ENCODE measurements at regions of chr16 and their contacts with region 1.

Region 1: GRCh38 chr16:57045694-57046381 is 46.5 kb upstream of the CPNE2 start:
- DNase-seq: peak; percentile 55
- ATAC-seq: peak; percentile 43
- H3K4me3 ChIP-seq: no peak overlapping the region
- H3K27ac ChIP-seq: peak overlapping the region; percentile 76
- H3K4me1 ChIP-seq: peaks cover 90% of the 10 kb centered on the region
- H3K27me3 ChIP-seq: no peaks in the 10 kb centered on the region
- CTCF ChIP-seq: peak; percentile 83 to 89 (median 83)
- EP300 ChIP-seq: peak; percentile 42 to 50; a peak in 1 of 4 replicates
- POLR2A ChIP-seq: peak; percentile 41; the same call in 1 of the 2 replicates
- RAD21 ChIP-seq: peak; percentile 88

Region 2: DNA sequence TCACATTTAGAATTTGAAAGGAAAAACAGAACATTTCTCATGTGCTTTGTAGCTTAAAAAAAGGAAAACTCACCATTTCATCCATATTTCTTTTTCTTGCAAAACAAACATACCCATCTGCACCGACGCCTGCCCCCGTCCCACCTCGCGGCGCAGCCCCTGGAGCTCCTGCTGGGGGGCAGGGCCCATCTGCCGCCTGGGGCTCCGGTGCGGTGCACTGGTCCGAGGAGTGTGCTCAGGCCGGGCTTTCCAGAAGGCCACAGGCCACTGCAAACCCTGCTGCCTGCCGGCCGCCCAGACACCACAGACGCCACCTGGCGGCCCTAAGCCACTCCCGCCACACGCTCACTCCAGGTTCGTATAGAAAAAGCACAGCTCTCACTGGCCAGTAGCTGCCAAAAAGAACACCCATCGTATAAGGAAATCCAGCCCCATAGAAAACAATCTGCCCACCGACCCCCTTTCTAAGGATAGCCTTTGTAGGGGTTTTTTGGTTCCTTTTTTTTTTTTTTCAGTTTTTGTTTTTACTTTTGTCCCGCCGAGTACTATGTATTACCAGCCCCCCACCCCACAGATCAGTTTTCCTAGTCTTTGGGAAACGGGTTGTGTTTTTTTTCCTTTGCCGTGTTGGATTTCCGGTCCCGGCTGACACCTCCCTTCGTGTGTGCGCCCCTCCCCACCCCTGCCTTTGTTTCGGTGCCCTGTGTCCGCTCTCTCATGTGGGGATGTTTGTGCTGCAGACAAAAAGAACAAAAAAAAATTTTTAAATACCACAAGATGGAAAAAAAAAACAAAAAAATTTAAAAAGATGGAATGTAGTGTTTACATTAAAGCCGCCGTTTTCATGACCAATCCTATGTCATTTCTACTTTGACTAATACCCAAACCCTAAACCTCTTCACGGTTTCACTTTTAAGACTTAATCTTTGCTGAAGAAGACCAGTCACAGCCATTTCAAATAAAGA is 689.3 kb before region 1 on chr16:
- CTCF ChIA-PET with region 1: no interaction called
- POLR2A ChIA-PET with region 1: no interaction called
- RAD21 ChIA-PET with region 1: no interaction called
- SMC1A ChIA-PET with region 1: no interaction called
- in situ Hi-C with region 1: no loop called
- intact Hi-C with region 1: no loop called
- DNase-seq: peak; percentile 46
- ATAC-seq: peak; percentile 98
- H3K4me3 ChIP-seq: peak overlapping the region; percentile 61
- H3K27ac ChIP-seq: peak overlapping the region; percentile 35
- H3K4me1 ChIP-seq: peaks cover 12% of the 10 kb centered on the region
- H3K27me3 ChIP-seq: no peaks in the 10 kb centered on the region
- CTCF ChIP-seq: peak; percentile 81 to 96 (median 87)
- EP300 ChIP-seq: 0 out of 4 replicates have a peak, but pooled peaks of 1 of the 2 experiments have one; percentile 1
- POLR2A ChIP-seq: no peak
- RAD21 ChIP-seq: peak; percentile 52

Region 3: DNA sequence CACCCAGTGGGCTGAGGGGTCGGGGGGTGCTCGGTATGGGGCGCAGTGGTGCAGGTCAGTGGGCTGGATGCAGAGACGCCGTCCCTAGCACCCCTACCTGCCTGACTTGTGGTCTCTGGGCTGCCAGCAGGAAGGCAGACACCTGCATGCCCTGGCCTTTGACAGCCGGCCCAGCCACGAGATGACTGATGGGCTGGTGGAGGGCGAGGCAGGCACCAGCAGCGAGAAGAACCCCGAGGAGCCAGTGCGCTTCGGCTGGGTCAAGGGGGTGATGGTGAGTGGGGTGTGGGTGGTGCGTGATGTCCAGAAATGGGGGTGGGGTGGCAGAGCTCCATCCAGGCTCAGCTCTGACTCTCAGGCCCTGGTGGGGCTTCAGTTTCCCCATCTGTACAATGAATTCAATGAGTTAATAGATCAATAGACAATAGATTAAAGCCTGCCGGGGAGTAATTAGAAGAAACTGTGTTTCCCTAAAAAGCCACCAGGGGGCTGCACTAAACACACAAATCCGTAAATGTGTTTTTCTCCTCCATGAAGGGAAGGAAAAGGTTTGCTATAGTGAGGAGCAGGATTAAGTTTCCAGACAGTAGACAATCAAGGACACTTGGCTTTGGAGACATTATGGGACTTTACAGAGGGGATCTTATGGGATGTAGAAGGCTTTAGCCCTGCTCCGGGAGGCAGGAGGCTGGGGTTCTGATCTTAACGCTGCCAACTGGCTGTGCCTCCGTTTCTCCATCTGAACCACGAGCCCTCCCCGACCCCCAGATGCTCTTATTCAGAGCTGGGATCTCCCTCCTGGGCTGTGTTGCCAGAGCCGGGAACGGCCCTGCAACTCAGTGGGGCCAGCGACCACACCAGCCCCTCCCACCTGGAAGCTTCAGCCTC is 178.7 kb before region 1 on chr16:
- CTCF ChIA-PET with region 1: interaction called, 8 read pairs
- POLR2A ChIA-PET with region 1: no interaction called
- RAD21 ChIA-PET with region 1: interaction called, 5 read pairs
- SMC1A ChIA-PET with region 1: interaction called, 3 read pairs
- in situ Hi-C with region 1: loop called (anchors 5 kb)
- intact Hi-C with region 1: loop called (anchors 5 kb)
- DNase-seq: no peak
- ATAC-seq: peak; percentile 27
- H3K4me3 ChIP-seq: no peak overlapping the region
- H3K27ac ChIP-seq: no peak overlapping the region
- H3K4me1 ChIP-seq: peaks cover 35% of the 10 kb centered on the region
- H3K27me3 ChIP-seq: no peaks in the 10 kb centered on the region
- CTCF ChIP-seq: peak; percentile 65 to 75 (median 65)
- EP300 ChIP-seq: no peak
- POLR2A ChIP-seq: no peak
- RAD21 ChIP-seq: peak; percentile 88

Region 4: DNA sequence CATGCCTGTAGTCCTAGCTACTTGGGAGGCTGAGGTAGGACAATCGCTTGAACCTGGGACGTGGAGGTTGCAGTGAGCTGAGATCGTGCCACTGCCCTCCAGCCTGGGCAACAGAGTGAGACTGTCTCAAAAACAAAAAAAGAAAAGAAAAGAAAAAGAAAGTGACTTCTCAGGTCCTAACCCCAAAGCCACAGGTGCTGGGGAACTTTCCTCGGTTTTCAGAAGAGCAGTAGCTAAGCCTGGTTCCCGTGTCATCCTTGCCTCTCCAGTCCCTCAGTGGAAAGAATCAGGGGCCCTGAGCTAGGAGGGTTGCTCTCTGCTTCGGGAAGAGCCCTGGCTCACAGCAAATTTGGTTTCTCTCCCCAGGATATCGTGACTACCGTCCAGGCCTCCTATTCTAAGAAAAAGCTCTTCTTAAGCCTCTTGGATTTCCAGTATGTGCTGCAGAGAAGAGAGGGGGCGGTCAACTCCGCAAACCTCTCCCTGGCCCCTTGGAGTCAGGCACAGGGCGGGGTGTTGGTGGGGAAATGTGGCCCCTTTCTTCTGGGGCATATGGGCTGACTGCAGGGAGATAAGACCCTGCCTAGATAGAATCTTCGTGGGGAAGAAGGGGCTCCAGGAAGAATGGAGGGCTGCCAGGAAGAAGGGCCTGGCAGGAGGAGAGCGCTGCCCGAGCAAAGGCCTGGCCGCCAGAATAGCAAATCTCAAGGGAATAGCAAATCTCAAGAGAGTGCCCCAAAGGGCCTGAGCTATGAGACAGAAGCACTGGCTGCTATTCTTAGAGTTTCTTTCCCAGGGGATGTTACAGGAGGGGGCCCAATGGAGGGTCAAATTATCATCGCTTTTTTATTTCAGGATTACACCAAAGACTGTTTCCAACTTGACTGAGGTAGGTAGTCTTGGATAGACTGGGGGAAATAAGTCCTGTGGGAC is 64.8 kb before region 1 on chr16:
- CTCF ChIA-PET with region 1: interaction called, 32 read pairs
- POLR2A ChIA-PET with region 1: interaction called, 104 read pairs
- RAD21 ChIA-PET with region 1: interaction called, 108 read pairs
- SMC1A ChIA-PET with region 1: interaction called, 111 read pairs
- in situ Hi-C with region 1: no loop called
- intact Hi-C with region 1: no loop called
- DNase-seq: no peak
- ATAC-seq: peak; percentile 67
- H3K4me3 ChIP-seq: no peak overlapping the region
- H3K27ac ChIP-seq: peak overlapping the region; percentile 41
- H3K4me1 ChIP-seq: peaks cover 48% of the 10 kb centered on the region
- H3K27me3 ChIP-seq: no peaks in the 10 kb centered on the region
- CTCF ChIP-seq: no peak
- EP300 ChIP-seq: no peak
- POLR2A ChIP-seq: no peak
- RAD21 ChIP-seq: no peak

Region 5: GRCh38 chr16:57000271-57001025 is 45.4 kb before region 1 on chr16:
- CTCF ChIA-PET with region 1: interaction called, 13 read pairs
- POLR2A ChIA-PET with region 1: interaction called, 13 read pairs
- RAD21 ChIA-PET with region 1: interaction called, 33 read pairs
- SMC1A ChIA-PET with region 1: interaction called, 13 read pairs
- in situ Hi-C with region 1: no loop called
- intact Hi-C with region 1: loop called (anchors 5 kb)
- DNase-seq: peak; percentile 87
- ATAC-seq: peak; percentile 80
- H3K4me3 ChIP-seq: peak overlapping the region; percentile 20; the same call in 1 of the 2 replicates
- H3K27ac ChIP-seq: peak overlapping the region; percentile 93
- H3K4me1 ChIP-seq: peaks cover 52% of the 10 kb centered on the region
- H3K27me3 ChIP-seq: no peaks in the 10 kb centered on the region
- CTCF ChIP-seq: no peak
- EP300 ChIP-seq: no peak
- POLR2A ChIP-seq: no peak; the same call in 1 of the 2 replicates
- RAD21 ChIP-seq: no peak

Region 6: DNA sequence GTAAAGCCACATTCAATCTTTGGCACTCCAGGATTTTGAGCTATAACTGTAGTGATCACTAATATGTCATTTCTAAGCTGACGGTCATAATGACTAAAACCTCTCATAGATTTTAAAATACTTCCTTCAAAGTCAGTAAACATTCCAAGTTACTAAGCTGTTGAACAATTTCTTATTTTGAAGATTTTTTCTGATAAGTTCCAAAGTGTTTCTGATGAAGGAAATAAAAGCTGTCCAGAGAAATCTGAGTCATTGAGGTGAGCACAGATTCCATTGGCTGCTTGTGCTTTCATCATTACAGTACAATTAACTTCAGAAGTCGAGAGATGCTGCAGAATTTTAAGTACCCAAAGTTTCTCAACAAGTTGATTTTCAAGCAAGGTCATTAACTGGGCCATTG is 32.6 kb before region 1 on chr16:
- CTCF ChIA-PET with region 1: interaction called, 21 read pairs
- POLR2A ChIA-PET with region 1: interaction called, 40 read pairs
- RAD21 ChIA-PET with region 1: interaction called, 14 read pairs
- SMC1A ChIA-PET with region 1: interaction called, 17 read pairs
- in situ Hi-C with region 1: no loop called
- intact Hi-C with region 1: loop called (anchors 2 kb)
- DNase-seq: no peak
- ATAC-seq: no peak
- H3K4me3 ChIP-seq: no peak overlapping the region
- H3K27ac ChIP-seq: peak overlapping the region; percentile 95
- H3K4me1 ChIP-seq: peaks cover 47% of the 10 kb centered on the region
- H3K27me3 ChIP-seq: no peaks in the 10 kb centered on the region
- CTCF ChIP-seq: no peak
- EP300 ChIP-seq: no peak
- POLR2A ChIP-seq: no peak
- RAD21 ChIP-seq: no peak

Region 7: GRCh38 chr16:57029161-57030160 is 16.4 kb before region 1 on chr16:
- CTCF ChIA-PET with region 1: interaction called, 7 read pairs
- POLR2A ChIA-PET with region 1: interaction called, 3 read pairs
- RAD21 ChIA-PET with region 1: interaction called, 21 read pairs
- SMC1A ChIA-PET with region 1: interaction called, 14 read pairs
- in situ Hi-C with region 1: no loop called
- intact Hi-C with region 1: no loop called
- DNase-seq: no peak
- ATAC-seq: no peak
- H3K4me3 ChIP-seq: no peak overlapping the region
- H3K27ac ChIP-seq: no peak overlapping the region
- H3K4me1 ChIP-seq: no peaks in the 10 kb centered on the region
- H3K27me3 ChIP-seq: no peaks in the 10 kb centered on the region
- CTCF ChIP-seq: no peak
- EP300 ChIP-seq: no peak
- POLR2A ChIP-seq: no peak
- RAD21 ChIP-seq: no peak

Region 8: GRCh38 chr16:57147381-57148221 is 101.8 kb after region 1 on chr16:
- CTCF ChIA-PET with region 1: no interaction called
- POLR2A ChIA-PET with region 1: no interaction called
- RAD21 ChIA-PET with region 1: no interaction called
- SMC1A ChIA-PET with region 1: no interaction called
- in situ Hi-C with region 1: no loop called
- intact Hi-C with region 1: no loop called
- DNase-seq: no peak
- ATAC-seq: no peak
- H3K4me3 ChIP-seq: no peak overlapping the region
- H3K27ac ChIP-seq: no peak overlapping the region; the same call in 1 of the 2 replicates
- H3K4me1 ChIP-seq: peaks cover 15% of the 10 kb centered on the region
- H3K27me3 ChIP-seq: no peaks in the 10 kb centered on the region
- CTCF ChIP-seq: no peak
- EP300 ChIP-seq: no peak
- POLR2A ChIP-seq: no peak
- RAD21 ChIP-seq: no peak